ENCODE measurements at regions of chr22 and their contacts with region 1.

Region 1: GRCh38 chr22:46013460-46014416 is 36.8 kb upstream of the WNT7B start:
- DNase-seq: peak; percentile 96
- ATAC-seq: peak; percentile 98
- H3K4me3 ChIP-seq: peak overlapping the region; percentile 58
- H3K27ac ChIP-seq: peak overlapping the region; percentile 92
- H3K4me1 ChIP-seq: peaks cover 10% of the 10 kb centered on the region
- H3K27me3 ChIP-seq: no peaks in the 10 kb centered on the region
- CTCF ChIP-seq: peak; percentile 81
- POLR2A ChIP-seq: peak; percentile 25
- RAD21 ChIP-seq: peak; percentile 71

Region 2: GRCh38 chr22:45903355-45904149 is 110.2 kb before region 1 on chr22:
- CTCF ChIA-PET with region 1: no interaction called
- POLR2A ChIA-PET with region 1: no interaction called
- dilution Hi-C with region 1: no loop called
- in situ Hi-C with region 1: no loop called
- intact Hi-C with region 1: no loop called
- DNase-seq: peak; percentile 69
- ATAC-seq: peak; percentile 91
- H3K4me3 ChIP-seq: no peak overlapping the region
- H3K27ac ChIP-seq: no peak overlapping the region
- H3K4me1 ChIP-seq: peaks cover 22% of the 10 kb centered on the region
- H3K27me3 ChIP-seq: peaks cover 14% of the 10 kb centered on the region
- CTCF ChIP-seq: no peak
- POLR2A ChIP-seq: no peak
- RAD21 ChIP-seq: no peak

Region 3: DNA sequence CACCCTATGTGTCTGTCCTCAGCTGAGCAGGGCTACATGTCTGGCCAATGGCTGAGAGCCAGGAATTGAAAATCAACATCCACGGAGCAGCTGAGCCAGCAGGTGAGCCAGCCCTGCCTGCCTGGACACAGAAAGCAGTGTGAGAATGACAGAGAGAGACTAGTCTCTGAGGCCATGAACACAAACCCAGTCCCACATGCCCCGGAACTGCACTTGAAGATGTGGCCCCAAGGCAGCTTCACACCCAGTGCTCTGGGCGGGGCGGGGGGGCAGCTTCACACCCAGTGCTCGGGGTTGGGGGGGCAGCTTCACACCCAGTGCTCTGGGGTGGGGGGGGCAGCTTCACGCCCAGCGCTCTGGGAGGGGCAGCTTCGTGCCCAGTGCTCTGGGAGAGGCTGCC is 359.4 kb after region 1 on chr22:
- CTCF ChIA-PET with region 1: no interaction called
- POLR2A ChIA-PET with region 1: interaction called, 22 read pairs
- dilution Hi-C with region 1: no loop called
- in situ Hi-C with region 1: no loop called
- intact Hi-C with region 1: no loop called
- DNase-seq: no peak
- ATAC-seq: no peak
- H3K4me3 ChIP-seq: no peak overlapping the region
- H3K27ac ChIP-seq: no peak overlapping the region
- H3K4me1 ChIP-seq: no peaks in the 10 kb centered on the region; the same call in 1 of the 2 replicates
- H3K27me3 ChIP-seq: peaks cover 14% of the 10 kb centered on the region; the same call in 1 of the 2 replicates
- CTCF ChIP-seq: no peak
- POLR2A ChIP-seq: no peak
- RAD21 ChIP-seq: no peak

Measured in IMR-90 (cell line).